Activated CD4-positive, alpha-beta T cell treated with anti-CD3 and anti-CD28 coated beads for 36 hours (primary cell): ENCODE measurements at regions of chr5 and their contacts with region 1.

Region 1: GRCh38 chr5:126600631-126601511 is at the start of gene PHAX:
- DNase-seq: peak; percentile 87
- ATAC-seq: peak; percentile 94
- H3K4me3 Mint-ChIP-seq: peak within 1 kb of the TSS; percentile 97
- H3K27ac Mint-ChIP-seq: peak within 1 kb of the TSS; percentile 99
- H3K4me1 Mint-ChIP-seq: peaks cover 38% of the 10 kb centered on the region
- H3K27me3 Mint-ChIP-seq: no peaks in the 10 kb centered on the region
- total RNA-seq, gene PHAX: 41.4 to 49.1 TPM

Region 2: DNA sequence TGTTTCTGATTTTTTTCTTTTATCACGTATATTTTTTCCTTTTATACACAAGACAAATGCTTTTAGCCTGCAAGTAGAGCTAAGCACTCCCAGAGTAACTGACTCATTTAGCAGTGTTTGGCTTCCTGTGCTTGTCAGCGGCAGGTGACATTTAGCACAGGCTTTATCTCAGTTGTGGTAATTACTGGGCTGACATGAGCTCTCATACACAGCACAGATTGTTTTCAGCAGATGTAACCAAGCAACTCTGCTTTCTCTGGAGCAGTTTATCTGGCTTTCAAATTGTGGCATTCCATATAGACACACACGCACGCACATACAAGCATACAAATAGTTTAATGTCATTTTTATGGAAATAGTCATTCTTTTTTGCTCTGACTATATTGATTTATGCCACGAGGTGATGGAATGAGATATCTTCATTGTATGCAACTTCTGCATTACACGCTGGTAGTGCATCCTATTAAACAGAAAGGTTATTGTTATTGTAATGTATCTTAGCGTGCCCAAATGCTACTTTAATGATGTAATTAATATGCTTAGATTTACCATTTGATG is 556.7 kb before region 1 on chr5:
- CTCF ChIA-PET with region 1: no interaction called
- POLR2A ChIA-PET with region 1: no interaction called
- intact Hi-C with region 1: no loop called
- DNase-seq: no peak
- ATAC-seq: no peak
- H3K4me3 Mint-ChIP-seq: no peak overlapping the region
- H3K27ac Mint-ChIP-seq: no peak overlapping the region
- H3K4me1 Mint-ChIP-seq: no peaks in the 10 kb centered on the region
- H3K27me3 Mint-ChIP-seq: no peaks in the 10 kb centered on the region

Region 3: DNA sequence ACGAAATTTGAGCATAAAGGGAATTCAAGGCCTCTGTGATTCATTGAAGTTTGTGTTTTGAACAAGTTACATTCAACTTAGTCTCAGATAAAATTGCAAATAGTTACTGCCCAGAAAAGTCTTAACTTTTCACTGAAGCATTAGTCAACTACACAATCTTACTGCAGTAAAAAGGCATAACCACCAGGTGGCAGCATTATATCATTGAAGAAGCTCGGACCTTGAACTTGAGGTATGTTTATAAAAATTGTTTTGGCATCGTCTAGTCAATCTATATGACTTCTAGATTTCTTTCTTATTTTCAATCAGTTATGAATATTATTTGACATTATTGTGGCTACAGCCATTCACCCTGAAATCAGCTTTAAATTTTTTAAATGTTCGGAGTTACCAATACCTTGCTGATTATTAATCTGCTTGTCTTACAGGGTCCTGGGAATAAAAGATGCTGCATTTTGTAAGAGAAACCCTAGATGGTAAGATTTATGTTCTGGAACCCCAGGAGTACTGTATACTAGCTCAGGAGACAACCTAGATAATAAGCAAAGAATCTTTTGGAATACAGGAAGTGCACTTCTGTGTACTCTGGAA is 261.6 kb before region 1 on chr5:
- CTCF ChIA-PET with region 1: interaction called, 4 read pairs
- POLR2A ChIA-PET with region 1: no interaction called
- intact Hi-C with region 1: loop called (anchors 2 to 5 kb)
- DNase-seq: peak; percentile 64
- ATAC-seq: peak; percentile 53
- H3K4me3 Mint-ChIP-seq: no peak overlapping the region
- H3K27ac Mint-ChIP-seq: no peak overlapping the region
- H3K4me1 Mint-ChIP-seq: no peaks in the 10 kb centered on the region
- H3K27me3 Mint-ChIP-seq: peaks cover 6% of the 10 kb centered on the region

Region 4: GRCh38 chr5:126363658-126364057 is 237.2 kb before region 1 on chr5:
- CTCF ChIA-PET with region 1: no interaction called
- POLR2A ChIA-PET with region 1: no interaction called
- intact Hi-C with region 1: no loop called
- DNase-seq: no peak
- ATAC-seq: no peak
- H3K4me3 Mint-ChIP-seq: no peak overlapping the region
- H3K27ac Mint-ChIP-seq: no peak overlapping the region
- H3K4me1 Mint-ChIP-seq: no peaks in the 10 kb centered on the region
- H3K27me3 Mint-ChIP-seq: no peaks in the 10 kb centered on the region

Region 5: DNA sequence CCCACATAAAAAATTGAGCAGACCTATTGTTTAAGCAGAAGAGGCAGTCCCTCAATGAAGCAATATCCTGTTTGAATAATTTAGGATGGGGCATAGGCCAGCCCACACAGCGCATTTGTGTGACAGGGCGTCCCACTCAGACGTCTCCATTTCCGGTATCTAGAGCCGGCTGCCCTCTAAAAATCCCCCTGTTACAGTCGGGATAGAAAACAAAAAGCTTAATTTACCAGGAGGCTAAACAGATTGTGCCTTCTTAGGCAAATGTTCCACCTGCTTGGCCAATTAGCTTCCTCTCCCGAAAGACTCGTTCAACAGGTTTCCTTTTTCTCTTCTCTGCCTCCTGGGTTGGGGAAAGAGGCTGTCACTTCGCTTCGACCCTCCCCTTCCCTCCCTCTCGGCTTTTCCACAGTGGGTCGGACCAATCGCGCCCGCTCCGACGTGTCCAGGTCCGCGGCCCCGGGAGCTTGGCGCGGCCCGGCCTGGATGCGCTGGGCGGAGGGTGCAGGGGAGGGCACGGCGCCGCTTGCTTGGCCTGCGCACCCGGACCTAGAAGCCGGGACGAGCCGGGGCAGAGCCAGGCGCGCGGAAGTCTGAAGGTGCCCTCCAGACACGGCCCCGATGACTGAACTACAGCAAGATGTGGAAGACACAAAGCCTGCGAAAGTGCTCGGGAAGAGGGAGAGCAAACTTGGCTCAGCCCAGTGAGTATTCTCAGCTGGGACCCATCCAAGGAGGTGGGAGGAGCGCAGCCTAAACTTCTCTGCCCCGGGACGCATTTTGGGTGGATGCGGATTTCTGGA is 177.7 kb before region 1 on chr5 and contains the start of gene GRAMD2B:
- CTCF ChIA-PET with region 1: no interaction called
- POLR2A ChIA-PET with region 1: no interaction called
- intact Hi-C with region 1: loop called in 1 of 2 experiments (anchors 2 kb)
- DNase-seq: peak; percentile 82
- ATAC-seq: peak; percentile 86
- H3K4me3 Mint-ChIP-seq: peak within 1 kb of the TSS; percentile 87
- H3K27ac Mint-ChIP-seq: peak within 1 kb of the TSS; percentile 90
- H3K4me1 Mint-ChIP-seq: peaks cover 40% of the 10 kb centered on the region
- H3K27me3 Mint-ChIP-seq: no peaks in the 10 kb centered on the region
- total RNA-seq, gene GRAMD2B: 9.7 to 13.9 TPM

Region 6: DNA sequence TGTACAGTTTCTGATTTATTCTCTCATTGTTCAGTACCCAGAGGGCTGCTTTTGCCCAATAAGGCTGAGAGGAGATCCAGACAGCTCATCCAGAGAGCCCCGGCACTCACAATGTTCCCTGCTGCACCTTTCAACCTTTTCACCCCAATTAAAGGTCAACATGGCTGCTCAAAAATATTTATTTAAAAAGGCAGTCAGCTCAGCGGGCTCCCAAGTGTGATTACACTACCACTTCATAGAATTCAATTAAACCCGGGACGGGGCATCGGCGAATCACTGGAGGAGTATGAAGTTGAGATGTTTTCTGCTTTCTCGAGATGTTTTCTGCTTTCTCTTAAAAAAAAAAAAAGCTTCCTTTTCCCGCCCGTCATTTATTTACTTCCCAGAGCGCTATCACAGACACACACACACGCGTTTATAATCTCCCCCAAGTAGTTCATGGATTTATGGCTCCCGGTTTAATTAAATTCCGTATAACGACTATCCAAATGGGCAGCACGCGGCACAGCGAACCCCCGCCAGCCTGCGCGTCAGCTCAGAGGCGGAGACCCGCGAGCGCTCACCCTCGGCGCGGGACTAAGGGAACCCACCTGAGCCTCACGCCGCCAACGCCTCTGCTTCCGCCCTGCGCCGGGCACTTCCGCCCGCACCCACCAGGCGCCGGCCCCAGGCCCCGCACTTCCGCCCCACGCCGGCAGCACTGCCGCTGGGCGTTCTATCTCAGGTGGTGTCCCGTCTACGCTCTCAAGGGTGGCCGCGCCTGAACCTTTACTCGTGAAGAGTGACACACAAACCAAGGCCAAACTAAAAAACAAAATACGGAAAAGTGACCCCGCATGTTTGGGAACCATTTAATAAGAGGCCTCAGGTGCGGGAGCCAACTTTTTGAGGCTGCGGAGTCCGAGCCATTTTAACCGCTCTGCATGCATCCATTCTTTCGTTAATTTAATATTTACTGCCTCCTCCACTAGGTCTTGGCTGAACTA is 472.3 kb after region 1 on chr5 and contains the start of gene C5orf63:
- CTCF ChIA-PET with region 1: no interaction called
- POLR2A ChIA-PET with region 1: interaction called, 9 read pairs
- intact Hi-C with region 1: loop called in 1 of 2 experiments (anchors 2 kb)
- DNase-seq: peak; percentile 87
- ATAC-seq: peak; percentile 98
- H3K4me3 Mint-ChIP-seq: peak within 1 kb of the TSS; percentile 86
- H3K27ac Mint-ChIP-seq: peak within 1 kb of the TSS; percentile 97
- H3K4me1 Mint-ChIP-seq: peaks cover 9% of the 10 kb centered on the region
- H3K27me3 Mint-ChIP-seq: no peaks in the 10 kb centered on the region
- total RNA-seq, gene C5orf63: 12.0 to 14.2 TPM